Activated CD8-positive, alpha-beta T cell treated with anti-CD3 and anti-CD28 coated beads, Interleukin-2, amount 10 ng/mL, durations not matched to agents 7 days and 5 days (primary cell): ENCODE measurements at regions of chr1 and their contacts with region 1.

Region 1: DNA sequence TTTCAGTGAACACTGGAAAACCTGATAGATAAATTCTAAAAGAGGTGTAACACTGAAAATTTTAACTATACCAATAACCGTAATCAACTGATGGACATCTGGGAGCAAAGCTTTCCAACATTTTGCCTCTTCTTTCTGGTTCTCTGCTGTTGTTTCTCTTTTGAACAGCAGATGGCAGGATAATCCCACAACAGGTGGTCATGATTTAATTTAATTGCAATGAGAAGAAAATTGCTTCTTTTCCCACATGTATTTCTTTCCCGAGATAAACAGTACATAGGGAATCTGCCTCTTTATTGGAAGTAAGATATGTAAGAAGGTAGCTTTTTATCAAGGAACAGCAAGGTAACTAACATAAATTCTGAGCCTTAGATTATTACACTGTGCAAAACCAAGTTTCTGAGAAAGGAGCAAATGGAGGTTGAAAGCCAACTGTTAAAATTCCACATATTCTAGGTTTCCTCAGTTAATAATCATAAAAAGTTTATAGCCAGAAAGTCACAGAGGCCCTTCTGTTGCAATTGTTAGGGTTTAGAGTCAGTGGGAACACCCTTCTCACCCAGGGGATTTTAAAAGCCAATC is 72.9 kb downstream of the RPS6KA1 start:
- DNase-seq: peak; percentile 64
- ATAC-seq: peak; percentile 42
- H3K4me3 Mint-ChIP-seq: no peak overlapping the region
- H3K27ac Mint-ChIP-seq: no peak overlapping the region
- H3K4me1 Mint-ChIP-seq: peaks cover 23% of the 10 kb centered on the region
- H3K27me3 Mint-ChIP-seq: peaks cover 17% of the 10 kb centered on the region

Region 2: GRCh38 chr1:26468911-26469310 is 133.6 kb before region 1 on chr1:
- CTCF ChIA-PET with region 1: no interaction called
- POLR2A ChIA-PET with region 1: no interaction called
- DNase-seq: no peak
- ATAC-seq: no peak
- H3K4me3 Mint-ChIP-seq: no peak overlapping the region
- H3K27ac Mint-ChIP-seq: peak overlapping the region; percentile 35
- H3K4me1 Mint-ChIP-seq: peaks cover 19% of the 10 kb centered on the region
- H3K27me3 Mint-ChIP-seq: no peaks in the 10 kb centered on the region

Region 3: GRCh38 chr1:26583646-26584485 is 18.6 kb before region 1 on chr1:
- CTCF ChIA-PET with region 1: interaction called, 11 read pairs
- POLR2A ChIA-PET with region 1: no interaction called
- DNase-seq: no peak
- ATAC-seq: peak; percentile 43
- H3K4me3 Mint-ChIP-seq: no peak overlapping the region
- H3K27ac Mint-ChIP-seq: no peak overlapping the region
- H3K4me1 Mint-ChIP-seq: peaks cover 24% of the 10 kb centered on the region
- H3K27me3 Mint-ChIP-seq: no peaks in the 10 kb centered on the region

Region 4: DNA sequence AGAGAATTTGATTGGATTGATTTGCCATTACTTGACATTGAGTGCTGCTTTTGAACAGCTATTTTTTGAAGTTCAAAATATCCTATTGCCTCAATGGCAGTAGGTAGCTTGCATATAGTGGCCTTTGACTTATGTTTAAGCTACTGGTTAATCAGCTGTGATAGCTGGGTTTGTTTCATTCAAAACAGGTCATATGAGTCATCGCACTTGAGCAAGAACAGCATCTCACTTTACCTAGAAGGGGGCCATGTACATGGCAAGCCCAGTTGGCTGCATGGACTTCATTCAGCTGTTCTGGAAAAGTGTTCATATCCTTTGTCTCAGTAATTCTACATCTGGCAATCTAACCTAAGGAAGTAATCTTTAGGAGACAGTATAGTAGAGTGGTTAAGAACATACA is 64.4 kb after region 1 on chr1:
- CTCF ChIA-PET with region 1: no interaction called
- POLR2A ChIA-PET with region 1: no interaction called
- DNase-seq: no peak
- ATAC-seq: no peak
- H3K4me3 Mint-ChIP-seq: no peak overlapping the region
- H3K27ac Mint-ChIP-seq: no peak overlapping the region
- H3K4me1 Mint-ChIP-seq: no peaks in the 10 kb centered on the region
- H3K27me3 Mint-ChIP-seq: no peaks in the 10 kb centered on the region

Region 5: GRCh38 chr1:26695356-26696118 is 93.1 kb after region 1 on chr1 and contains the start of gene ARID1A:
- CTCF ChIA-PET with region 1: interaction called, 29 read pairs
- POLR2A ChIA-PET with region 1: interaction called, 7 read pairs
- DNase-seq: peak; percentile 96
- ATAC-seq: peak; percentile 61
- H3K4me3 Mint-ChIP-seq: peak within 1 kb of the TSS; percentile 88
- H3K27ac Mint-ChIP-seq: peak within 1 kb of the TSS; percentile 97
- H3K4me1 Mint-ChIP-seq: peaks cover 33% of the 10 kb centered on the region
- H3K27me3 Mint-ChIP-seq: no peaks in the 10 kb centered on the region
- total RNA-seq, gene ARID1A: 122 to 123 TPM

Region 6: GRCh38 chr1:26799479-26800142 is 197.1 kb after region 1 on chr1:
- CTCF ChIA-PET with region 1: interaction called, 24 read pairs
- POLR2A ChIA-PET with region 1: no interaction called
- DNase-seq: peak; percentile 54
- ATAC-seq: peak; percentile 76
- H3K4me3 Mint-ChIP-seq: peak overlapping the region; percentile 74
- H3K27ac Mint-ChIP-seq: peak overlapping the region; percentile 90
- H3K4me1 Mint-ChIP-seq: peaks cover 51% of the 10 kb centered on the region
- H3K27me3 Mint-ChIP-seq: no peaks in the 10 kb centered on the region

Region 7: GRCh38 chr1:26833432-26834405 is 231.2 kb after region 1 on chr1:
- CTCF ChIA-PET with region 1: interaction called, 20 read pairs
- POLR2A ChIA-PET with region 1: no interaction called
- DNase-seq: peak; percentile 97
- ATAC-seq: peak; percentile 97
- H3K4me3 Mint-ChIP-seq: peak overlapping the region; percentile 69
- H3K27ac Mint-ChIP-seq: peak overlapping the region; percentile 98
- H3K4me1 Mint-ChIP-seq: peaks cover 65% of the 10 kb centered on the region
- H3K27me3 Mint-ChIP-seq: no peaks in the 10 kb centered on the region

Region 8: GRCh38 chr1:26889551-26890466 is 287.3 kb after region 1 on chr1 and contains the start of gene GPN2:
- CTCF ChIA-PET with region 1: interaction called, 21 read pairs
- POLR2A ChIA-PET with region 1: interaction called, 3 read pairs
- DNase-seq: peak; percentile 86
- ATAC-seq: peak; percentile 97
- H3K4me3 Mint-ChIP-seq: peak within 1 kb of the TSS; percentile 96
- H3K27ac Mint-ChIP-seq: peak within 1 kb of the TSS; percentile 96
- H3K4me1 Mint-ChIP-seq: peaks cover 32% of the 10 kb centered on the region
- H3K27me3 Mint-ChIP-seq: no peaks in the 10 kb centered on the region
- total RNA-seq, gene GPN2: 28.9 to 32.8 TPM